MCF 10A (cell line): ENCODE measurements at regions of chr4 and their contacts with region 1.

Region 1: DNA sequence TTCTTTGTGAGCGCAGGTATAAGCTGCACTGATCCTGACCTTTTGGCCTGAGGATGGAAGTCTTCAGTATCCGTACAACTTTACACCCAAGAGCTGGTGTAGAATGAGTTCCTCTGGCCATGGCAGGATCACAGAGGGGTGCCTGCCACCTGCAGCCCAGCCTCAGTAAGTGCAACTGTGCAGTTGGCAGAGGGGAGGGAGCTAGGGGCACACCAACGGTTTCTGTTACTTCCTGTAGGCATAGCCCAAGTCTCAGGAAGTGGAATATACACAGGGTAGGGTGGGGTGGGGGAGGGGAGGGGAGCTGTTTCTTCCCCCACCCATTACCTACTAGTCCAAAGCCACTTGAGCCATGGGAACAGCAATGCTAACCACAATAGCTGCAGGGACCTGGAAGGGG is 85.4 kb upstream of the GBA3 start:
- DNase-seq: peak; percentile 69
- H3K4me3 Mint-ChIP-seq: no peak overlapping the region
- H3K27ac Mint-ChIP-seq: no peak overlapping the region
- H3K4me1 Mint-ChIP-seq: peaks cover 7% of the 10 kb centered on the region
- H3K27me3 Mint-ChIP-seq: no peaks in the 10 kb centered on the region
- CTCF ChIP-seq: peak; percentile 52

Region 2: GRCh38 chr4:22410645-22411247 is 196.6 kb before region 1 on chr4:
- CTCF ChIA-PET with region 1: interaction called, 72 read pairs
- POLR2A ChIA-PET with region 1: interaction called, 3 read pairs
- intact Hi-C with region 1: loop called (anchors 1 kb)
- DNase-seq: peak; percentile 22
- H3K4me3 Mint-ChIP-seq: no peak overlapping the region
- H3K27ac Mint-ChIP-seq: no peak overlapping the region
- H3K4me1 Mint-ChIP-seq: no peaks in the 10 kb centered on the region
- H3K27me3 Mint-ChIP-seq: no peaks in the 10 kb centered on the region
- CTCF ChIP-seq: peak; percentile 41

Region 3: DNA sequence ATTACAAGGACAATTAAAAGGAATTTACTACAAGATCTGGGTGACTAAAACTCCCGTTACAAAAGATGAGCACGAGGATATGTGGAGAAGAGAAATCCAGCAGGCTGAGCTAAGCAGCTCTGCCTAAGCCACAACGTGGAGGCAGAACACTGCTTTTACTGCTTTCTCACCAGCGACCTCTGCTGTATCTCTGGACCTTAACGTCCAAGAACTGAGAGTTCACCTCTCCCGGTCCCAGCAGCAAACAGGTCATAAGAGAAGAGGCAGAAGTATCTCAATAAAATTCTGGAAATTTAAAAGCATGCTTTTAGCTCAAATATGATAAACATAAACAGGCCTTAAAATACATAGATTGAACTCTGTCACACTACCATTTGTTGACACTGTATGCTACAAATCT is 172.5 kb before region 1 on chr4:
- CTCF ChIA-PET with region 1: interaction called, 5 read pairs
- POLR2A ChIA-PET with region 1: no interaction called
- intact Hi-C with region 1: loop called (anchors 1 kb)
- DNase-seq: peak; percentile 54
- H3K4me3 Mint-ChIP-seq: no peak overlapping the region
- H3K27ac Mint-ChIP-seq: no peak overlapping the region
- H3K4me1 Mint-ChIP-seq: no peaks in the 10 kb centered on the region
- H3K27me3 Mint-ChIP-seq: no peaks in the 10 kb centered on the region
- CTCF ChIP-seq: peak; percentile 32

Region 4: DNA sequence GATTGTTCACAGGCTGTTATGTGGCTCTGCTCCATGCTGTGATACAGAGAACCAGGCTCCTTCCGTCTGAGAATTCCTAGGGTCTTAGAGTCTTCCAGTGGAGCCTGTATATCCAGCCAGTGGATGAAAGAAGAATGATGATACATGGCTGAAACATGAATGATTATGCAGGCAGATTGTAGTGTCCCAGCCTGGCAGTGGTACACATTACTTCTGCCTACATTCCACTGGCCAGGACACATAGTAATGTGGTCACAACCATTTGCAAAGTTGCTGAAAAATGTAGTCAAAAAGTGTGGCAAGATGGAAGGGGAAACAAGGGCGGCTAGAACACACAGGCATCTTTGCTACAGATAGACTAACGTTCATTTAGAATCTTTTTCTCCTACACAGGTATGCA is 80.9 kb after region 1 on chr4:
- CTCF ChIA-PET with region 1: interaction called, 4 read pairs
- POLR2A ChIA-PET with region 1: no interaction called
- intact Hi-C with region 1: loop called (anchors 5 kb)
- DNase-seq: no peak
- H3K4me3 Mint-ChIP-seq: no peak overlapping the region
- H3K27ac Mint-ChIP-seq: peak overlapping the region; percentile 39
- H3K4me1 Mint-ChIP-seq: peaks cover 14% of the 10 kb centered on the region
- H3K27me3 Mint-ChIP-seq: no peaks in the 10 kb centered on the region
- CTCF ChIP-seq: no peak

Region 5: GRCh38 chr4:22877486-22878052 is 270.2 kb after region 1 on chr4:
- CTCF ChIA-PET with region 1: no interaction called
- POLR2A ChIA-PET with region 1: no interaction called
- intact Hi-C with region 1: no loop called
- DNase-seq: no peak
- H3K4me3 Mint-ChIP-seq: no peak overlapping the region
- H3K27ac Mint-ChIP-seq: no peak overlapping the region
- H3K4me1 Mint-ChIP-seq: no peaks in the 10 kb centered on the region
- H3K27me3 Mint-ChIP-seq: no peaks in the 10 kb centered on the region
- CTCF ChIP-seq: no peak

Region 6: DNA sequence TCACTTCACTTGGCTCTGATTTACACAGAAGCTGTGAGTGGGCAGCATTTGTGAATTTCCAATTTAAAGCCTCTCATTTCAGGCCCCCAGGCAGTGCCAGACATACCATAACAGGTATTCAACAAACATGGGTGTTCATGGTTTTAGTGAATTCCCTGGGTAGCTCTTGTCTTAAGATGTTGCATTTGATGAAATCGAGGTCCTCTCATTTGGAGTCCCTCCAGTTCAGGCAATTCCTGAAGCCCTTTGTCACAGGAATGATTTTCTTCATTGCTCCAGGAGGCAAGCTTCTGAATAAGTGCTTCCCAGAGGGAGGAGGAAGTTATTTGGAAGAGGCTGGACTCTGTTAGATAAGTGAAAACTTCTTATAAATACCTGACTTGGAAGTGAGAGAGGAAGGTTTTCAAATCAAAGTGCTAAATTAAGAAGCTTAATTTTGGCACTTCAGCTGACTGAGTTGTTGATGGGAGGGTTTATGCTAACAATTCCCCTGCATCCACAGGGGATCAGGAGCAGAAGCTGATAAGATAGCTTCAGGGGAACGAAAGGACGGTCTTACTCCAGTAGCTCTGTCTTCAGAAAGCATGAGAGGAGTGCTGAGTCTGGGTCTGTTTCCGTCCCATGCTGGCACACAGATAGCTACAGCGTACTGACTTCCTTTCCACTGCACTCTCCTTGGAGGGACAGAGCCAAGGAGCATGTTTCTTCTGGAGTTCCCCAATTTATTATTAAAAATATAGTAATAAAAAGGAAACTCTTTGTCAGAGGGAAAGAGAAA is 628.4 kb after region 1 on chr4:
- CTCF ChIA-PET with region 1: no interaction called
- POLR2A ChIA-PET with region 1: no interaction called
- intact Hi-C with region 1: no loop called
- DNase-seq: no peak
- H3K4me3 Mint-ChIP-seq: no peak overlapping the region
- H3K27ac Mint-ChIP-seq: no peak overlapping the region
- H3K4me1 Mint-ChIP-seq: peaks cover 23% of the 10 kb centered on the region
- H3K27me3 Mint-ChIP-seq: no peaks in the 10 kb centered on the region
- CTCF ChIP-seq: no peak